GM10248 (cell line): ENCODE measurements at regions of chr7 and their contacts with region 1.

Region 1: GRCh38 chr7:144653449-144653848 is 182.4 kb downstream of the TPK1 start:
- DNase-seq: no peak
- CTCF ChIP-seq: no peak

Region 2: DNA sequence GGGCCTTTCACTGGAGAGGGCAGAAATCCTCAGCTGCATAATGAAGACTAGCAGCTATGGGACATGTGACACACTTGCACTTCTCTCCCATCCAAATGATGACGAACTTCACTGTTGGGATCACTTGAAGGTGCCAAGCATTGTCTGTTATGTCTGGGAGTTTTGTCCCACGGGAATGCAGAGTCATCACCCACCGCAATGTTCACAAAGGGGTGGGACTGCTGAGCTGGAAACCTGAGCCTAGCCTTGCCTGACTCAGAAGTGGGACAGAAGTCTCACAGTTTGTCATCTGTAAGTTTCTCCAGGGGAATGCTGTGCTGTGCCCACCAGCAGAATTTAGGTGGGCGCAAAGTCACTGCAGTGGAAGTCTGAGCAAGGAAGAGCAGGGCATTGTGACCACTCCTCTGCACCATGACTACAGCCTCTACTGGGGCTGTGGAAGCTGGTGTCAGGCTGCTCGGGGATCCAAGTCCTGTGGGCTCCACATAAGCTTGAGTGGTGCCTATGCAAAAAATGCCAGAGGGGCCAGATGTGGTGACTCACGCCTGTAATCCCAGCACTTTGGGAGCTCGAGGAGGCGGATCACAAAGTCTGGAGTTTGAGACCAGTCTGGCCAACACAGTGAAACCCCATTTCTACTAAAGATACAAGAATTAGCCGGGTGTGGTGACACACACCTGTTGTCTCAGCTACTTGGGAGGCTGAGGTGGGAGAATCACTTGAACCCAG is 991.1 kb after region 1 on chr7:
- CTCF ChIA-PET with region 1: no interaction called
- POLR2A ChIA-PET with region 1: interaction called, 10 read pairs
- DNase-seq: no peak
- CTCF ChIP-seq: no peak